ENCODE measurements at regions of chr14 and their contacts with region 1.

Region 1: DNA sequence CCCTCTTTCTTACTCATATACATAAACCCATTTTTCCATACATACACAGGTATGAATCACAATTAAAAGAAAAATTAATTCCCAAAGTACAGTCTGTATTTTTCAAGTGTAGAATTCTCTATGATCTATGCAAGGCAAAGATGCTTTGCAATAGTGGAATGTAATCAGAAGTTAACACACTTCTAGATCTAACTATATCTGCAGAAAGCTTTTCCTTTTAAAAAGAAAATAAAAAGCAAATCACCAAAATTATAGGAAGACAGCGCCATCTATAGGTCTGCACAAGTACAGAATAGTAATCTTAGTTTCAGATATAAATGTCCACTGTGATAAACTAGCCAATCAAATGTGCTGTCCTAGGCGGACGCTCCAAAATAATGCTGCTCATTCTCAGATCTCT is 22.0 kb downstream of the SLC25A21 start:
- DNase-seq: no peak
- H3K4me3 ChIP-seq: no peak overlapping the region
- H3K27me3 ChIP-seq: 0 out of 2 replicates have a peak, but pooled peaks cover 1% of the 10 kb centered on the region
- CTCF ChIP-seq: peak; percentile 63

Region 2: DNA sequence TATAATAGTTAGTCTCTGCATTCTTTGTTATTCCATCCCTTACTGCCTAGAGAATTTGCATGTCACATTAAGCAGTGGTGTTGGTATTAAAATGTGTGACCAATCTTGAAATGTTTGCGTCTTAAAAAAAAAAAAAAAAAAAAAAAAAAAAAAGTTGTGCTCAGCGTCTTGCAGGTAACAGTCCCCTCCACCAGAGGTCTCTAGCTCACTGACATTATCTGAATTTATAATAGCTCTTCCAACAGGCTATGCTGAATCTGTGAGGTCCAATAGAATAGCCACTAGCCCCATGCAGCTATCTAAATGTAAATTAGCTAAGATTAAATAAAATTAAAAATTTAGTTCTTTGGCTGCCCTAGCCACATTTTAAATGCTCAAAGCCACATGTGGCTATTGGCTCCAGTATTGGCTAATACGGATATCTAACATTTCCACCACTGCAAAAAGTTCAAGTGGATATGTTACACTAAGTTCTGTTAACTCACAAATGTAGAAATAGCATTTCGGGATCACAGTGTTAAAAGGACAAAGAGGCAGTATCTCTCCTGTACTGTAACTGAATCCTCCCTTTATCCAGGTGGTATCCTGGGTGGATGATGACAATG is 596.7 kb before region 1 on chr14:
- CTCF ChIA-PET with region 1: interaction called, 55 read pairs
- POLR2A ChIA-PET with region 1: no interaction called
- DNase-seq: no peak
- H3K4me3 ChIP-seq: no peak overlapping the region
- H3K27me3 ChIP-seq: no peaks in the 10 kb centered on the region
- CTCF ChIP-seq: peak; percentile 79

Region 3: DNA sequence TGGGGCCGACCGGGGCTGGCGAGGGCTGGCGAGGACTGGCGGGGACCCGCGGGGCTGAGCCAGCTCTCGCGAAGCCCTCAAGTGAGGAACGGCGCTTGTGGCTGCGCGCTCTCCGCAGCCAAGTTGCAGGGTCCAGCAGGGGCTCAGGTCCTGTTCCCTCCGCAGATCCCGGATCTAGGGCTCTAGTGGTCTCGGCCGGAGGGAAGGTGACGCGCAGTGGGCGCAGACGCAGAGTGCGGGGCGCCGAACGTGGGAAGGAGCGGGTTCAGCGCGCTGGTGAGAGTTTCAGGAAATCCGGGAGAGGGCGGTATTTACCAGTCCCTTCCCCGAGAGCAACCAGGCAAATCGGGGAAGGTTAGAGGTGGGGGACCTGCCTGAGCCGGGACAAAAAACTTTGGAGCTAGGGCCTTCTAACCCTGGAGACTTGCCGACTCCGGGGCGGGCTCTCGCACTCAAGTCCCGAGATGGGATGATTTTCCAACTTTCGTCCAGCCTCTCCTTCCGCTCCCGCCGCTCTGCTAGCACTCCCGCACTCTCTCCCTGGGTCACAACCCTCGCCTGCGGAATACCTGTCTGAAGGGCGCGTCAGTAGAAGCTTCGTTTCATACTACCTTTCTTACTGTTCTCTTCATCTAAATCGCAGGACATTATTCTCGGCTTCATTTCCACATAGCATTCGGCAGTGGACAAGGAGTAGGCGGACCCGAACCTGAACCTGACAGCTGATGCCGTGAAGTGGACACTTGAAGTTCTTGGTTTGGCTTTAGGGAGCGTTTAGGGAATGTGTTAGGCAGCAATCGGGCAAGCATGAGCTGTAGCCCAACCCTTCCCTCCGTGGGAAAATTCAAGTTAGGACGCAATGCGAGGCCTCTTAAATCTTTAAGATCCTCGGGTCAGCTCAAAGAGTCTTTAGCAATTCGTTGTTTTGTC is 502.3 kb before region 1 on chr14:
- CTCF ChIA-PET with region 1: interaction called, 39 read pairs
- POLR2A ChIA-PET with region 1: interaction called, 3 read pairs
- DNase-seq: no peak
- H3K4me3 ChIP-seq: peak overlapping the region; percentile 21
- H3K27me3 ChIP-seq: peaks cover 31% of the 10 kb centered on the region
- CTCF ChIP-seq: peak; percentile 60

Region 4: DNA sequence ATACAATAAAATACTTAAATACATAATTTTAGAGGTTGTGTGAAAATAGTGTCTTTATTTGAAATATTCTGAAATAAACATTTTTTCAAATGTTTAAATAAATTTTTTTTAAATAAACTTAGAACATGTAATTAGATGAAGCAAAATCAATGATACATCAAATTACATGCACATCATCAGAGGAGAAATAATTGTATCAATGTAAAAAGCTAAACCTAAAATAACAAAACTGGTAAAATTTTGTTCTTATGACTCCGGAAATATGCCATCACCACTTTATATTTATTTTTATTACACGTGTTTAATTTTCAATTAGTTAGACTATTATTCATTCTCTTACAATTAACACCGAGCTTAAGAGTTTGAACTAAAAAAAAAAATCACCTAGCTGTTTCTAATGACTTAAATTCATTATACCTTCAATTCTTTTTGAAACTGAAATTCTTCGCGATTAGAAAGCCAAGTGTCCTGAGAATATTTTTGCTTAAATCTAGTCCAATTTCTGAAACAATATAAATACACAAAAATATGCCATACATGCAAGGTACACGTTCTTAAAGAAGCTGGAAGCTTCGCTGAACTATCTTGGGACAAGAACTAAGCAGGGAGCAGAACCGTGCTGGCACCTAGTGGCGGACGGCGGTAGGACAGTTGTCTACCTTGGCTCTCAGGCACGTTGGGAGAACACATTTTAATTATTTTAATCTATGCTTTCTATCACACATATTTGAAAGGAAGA is 208.5 kb before region 1 on chr14:
- CTCF ChIA-PET with region 1: interaction called, 13 read pairs
- POLR2A ChIA-PET with region 1: no interaction called
- DNase-seq: no peak
- H3K4me3 ChIP-seq: no peak overlapping the region
- H3K27me3 ChIP-seq: no peaks in the 10 kb centered on the region
- CTCF ChIP-seq: peak; percentile 98

Region 5: DNA sequence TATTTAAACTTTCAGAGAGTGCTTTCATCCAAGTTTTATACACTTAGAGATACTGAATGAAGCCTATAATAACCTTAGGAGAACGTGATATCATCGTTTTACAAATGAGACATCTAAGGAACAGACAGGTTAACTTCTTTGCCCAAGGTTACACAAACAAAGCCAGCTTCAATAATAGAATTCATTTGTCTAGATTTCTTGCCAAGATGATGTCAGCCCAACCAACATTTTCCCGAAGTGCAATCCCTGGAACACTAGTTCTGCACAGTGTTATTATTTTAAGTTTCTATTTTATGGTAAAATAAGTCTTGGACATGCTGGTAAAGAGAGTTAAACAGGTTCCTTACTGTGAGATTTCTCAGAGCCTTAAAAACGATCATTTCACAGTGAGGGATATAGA is 152.6 kb before region 1 on chr14:
- CTCF ChIA-PET with region 1: no interaction called
- POLR2A ChIA-PET with region 1: no interaction called
- DNase-seq: no peak
- H3K4me3 ChIP-seq: no peak overlapping the region
- H3K27me3 ChIP-seq: no peaks in the 10 kb centered on the region
- CTCF ChIP-seq: no peak

Region 6: DNA sequence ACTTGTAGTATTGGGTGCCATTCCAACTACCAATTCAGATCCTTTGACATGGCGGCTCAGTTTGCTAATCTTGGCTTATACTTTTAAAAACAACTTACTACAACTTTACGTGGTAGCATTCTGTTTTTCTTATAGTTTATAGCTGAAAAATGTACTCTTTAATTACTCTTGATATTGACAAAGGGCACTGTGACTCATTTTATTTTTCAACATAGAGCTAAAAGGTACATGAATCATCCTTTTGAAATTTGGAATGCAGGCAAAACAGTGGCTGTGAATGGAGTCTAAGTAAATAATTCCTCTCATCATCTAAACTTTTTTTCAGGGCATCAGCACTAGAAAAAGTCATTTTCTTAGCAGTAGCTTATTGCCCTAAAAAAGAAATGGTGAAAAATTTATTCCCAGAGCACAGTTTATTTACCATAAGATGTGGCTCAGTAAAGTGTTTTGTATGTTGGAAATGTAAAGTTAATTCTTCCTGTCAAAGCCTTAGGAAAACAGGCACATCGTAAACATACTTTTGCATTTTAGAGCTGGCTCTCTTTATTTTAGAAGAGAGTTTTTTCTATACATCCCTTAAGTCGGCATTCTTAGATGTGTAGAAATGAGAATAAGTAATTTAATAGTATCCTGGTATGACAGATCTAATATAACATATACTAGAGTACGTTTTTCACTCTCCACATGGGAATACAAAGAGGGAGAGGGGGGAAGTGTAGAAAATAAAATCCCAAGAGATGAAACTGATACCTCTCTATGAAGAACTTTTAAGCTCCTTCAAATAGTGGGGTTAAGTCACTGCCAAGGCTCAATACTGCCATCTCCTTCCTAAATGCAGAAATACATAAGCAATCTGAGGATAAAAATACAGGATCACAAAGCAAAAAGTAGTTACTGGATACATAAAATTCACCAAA is 33.2 kb before region 1 on chr14:
- CTCF ChIA-PET with region 1: interaction called, 10 read pairs
- POLR2A ChIA-PET with region 1: no interaction called
- DNase-seq: peak; percentile 26
- H3K4me3 ChIP-seq: no peak overlapping the region
- H3K27me3 ChIP-seq: no peaks in the 10 kb centered on the region
- CTCF ChIP-seq: peak; percentile 58

Region 7: DNA sequence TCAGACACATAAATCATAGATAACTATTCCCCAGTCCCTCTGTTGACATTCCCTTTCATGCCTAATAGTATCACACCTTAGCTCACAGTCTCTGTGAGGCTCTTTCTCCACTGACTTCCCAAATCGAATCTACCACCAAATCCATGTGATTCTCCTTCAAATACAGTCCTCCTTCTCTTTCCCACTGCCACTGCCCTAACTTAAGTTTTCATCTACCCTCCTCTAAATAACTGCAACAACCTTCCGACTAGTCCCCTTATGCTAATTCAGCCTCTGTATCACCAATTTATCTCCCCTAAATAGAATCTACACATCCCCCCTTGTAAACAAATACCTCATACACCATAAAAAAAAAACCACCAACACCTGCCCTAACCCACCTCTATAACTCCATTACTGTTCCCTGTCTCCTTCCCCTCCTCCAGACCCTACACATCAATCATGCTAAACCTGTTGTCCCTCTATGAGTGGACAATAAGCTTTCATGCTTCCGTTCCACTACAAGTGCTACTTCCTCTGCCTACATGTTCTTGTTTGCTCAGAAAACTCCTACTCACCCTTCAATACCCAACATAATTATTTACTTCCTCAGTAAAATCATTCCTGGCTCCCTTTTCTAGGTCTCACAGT is 17.0 kb before region 1 on chr14:
- CTCF ChIA-PET with region 1: interaction called, 27 read pairs
- POLR2A ChIA-PET with region 1: no interaction called
- DNase-seq: no peak
- H3K4me3 ChIP-seq: no peak overlapping the region
- H3K27me3 ChIP-seq: no peaks in the 10 kb centered on the region
- CTCF ChIP-seq: no peak

Region 8: DNA sequence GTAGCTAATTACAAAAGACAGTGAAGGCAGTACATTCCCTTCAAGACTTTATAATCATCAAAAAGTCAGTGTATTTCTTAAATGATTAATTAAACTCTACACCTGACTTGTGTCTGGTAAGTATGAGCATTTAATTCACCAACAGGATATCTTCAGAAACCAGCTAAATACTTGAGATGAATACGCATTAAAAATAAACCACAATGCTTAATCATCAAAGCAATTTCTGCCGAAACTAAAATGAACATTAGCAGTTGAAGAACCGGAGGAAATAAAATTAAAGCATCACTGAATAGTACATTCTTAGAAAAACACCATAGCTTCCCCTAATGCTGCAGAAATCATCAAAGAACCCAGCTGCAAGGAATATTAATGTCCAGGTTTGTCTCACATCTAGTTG is 10.7 kb before region 1 on chr14:
- CTCF ChIA-PET with region 1: interaction called, 27 read pairs
- POLR2A ChIA-PET with region 1: no interaction called
- DNase-seq: no peak
- H3K4me3 ChIP-seq: no peak overlapping the region
- H3K27me3 ChIP-seq: no peaks in the 10 kb centered on the region
- CTCF ChIP-seq: no peak

Region 9: DNA sequence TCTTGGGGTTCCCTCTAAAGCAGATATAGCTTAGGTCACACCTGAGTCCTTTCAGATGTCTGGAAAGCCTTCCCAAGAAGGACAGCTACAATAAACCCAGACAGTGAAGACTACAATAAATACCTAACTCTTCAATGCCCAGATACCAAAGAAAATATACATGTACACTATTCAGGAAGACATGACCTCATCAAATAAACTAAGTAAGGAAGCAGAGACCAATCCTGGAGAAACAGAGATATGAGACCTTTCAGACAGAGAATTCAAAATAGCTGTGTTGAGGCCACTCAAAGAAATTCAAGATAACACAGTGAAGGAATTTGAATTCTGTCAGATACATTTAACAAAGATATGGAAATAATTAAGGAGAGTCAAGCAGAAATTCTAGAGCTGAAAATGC is 62.6 kb after region 1 on chr14:
- CTCF ChIA-PET with region 1: no interaction called
- POLR2A ChIA-PET with region 1: no interaction called
- DNase-seq: no peak
- H3K4me3 ChIP-seq: no peak overlapping the region
- H3K27me3 ChIP-seq: no peaks in the 10 kb centered on the region
- CTCF ChIP-seq: no peak